ENCODE measurements at regions of chr7 and their contacts with region 1.

Region 1: DNA sequence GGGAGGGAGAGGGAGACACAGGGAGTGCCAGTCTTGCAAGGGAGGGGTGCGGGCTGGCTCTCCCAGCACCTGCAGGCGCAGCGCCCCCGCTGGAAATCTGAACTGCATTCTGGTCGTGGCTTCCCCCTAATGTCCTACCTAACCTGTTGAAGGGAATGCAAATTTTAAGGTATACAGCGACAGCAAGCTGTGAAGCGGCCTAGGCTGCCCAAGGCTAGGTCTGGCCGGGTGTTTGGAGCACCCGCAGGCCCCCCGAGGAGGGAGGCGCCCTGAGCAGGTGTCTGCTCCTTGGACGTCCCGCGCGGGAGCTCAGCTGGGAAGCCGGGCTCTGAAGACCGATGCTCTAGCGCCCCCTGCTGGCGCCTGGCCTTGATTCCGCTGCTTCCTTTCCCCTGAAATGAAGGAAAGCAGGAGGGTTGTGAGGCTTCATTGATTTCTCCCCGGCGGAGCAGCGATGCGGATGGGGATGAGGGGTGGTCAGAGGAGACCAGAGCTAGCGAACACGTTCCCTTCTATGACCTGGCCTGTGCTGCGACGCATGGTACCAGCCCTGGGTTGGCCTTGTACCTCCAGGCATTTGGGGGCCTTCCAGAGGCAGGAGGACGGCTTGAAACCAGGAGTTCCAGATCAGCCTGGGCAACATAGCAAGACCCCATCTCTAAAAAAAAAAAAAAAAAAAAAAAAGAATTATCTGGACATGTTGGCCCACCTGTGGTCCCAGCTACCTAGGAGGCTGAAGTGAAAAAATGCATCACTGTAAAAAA is 601.3 kb downstream of the GALNT17 start:
- DNase-seq: peak; percentile 34 to 50
- ATAC-seq: peak; percentile 55 to 60
- H3K4me3 ChIP-seq: no peak overlapping the region
- H3K27ac ChIP-seq: no peak overlapping the region
- H3K4me1 ChIP-seq: peaks cover 0 to 3% of the 10 kb centered on the region in 2 donors
- H3K27me3 ChIP-seq: no peaks in the 10 kb centered on the region
- CTCF ChIP-seq: peak; percentile 58 to 89 (median 87)
- POLR2A ChIP-seq: no peak

Region 2: GRCh38 chr7:70829221-70830059 is 903.8 kb before region 1 on chr7:
- in situ Hi-C with region 1: no loop called
- intact Hi-C with region 1: loop called (anchors 1 kb)
- DNase-seq: peak; percentile 28 to 38
- ATAC-seq: peak; percentile 62 to 76
- H3K4me3 ChIP-seq: no peak overlapping the region
- H3K27ac ChIP-seq: no peak overlapping the region
- H3K4me1 ChIP-seq: no peaks in the 10 kb centered on the region
- H3K27me3 ChIP-seq: peaks cover 0 to 3% (median 0%) of the 10 kb centered on the region in 3 donors
- CTCF ChIP-seq: peak; percentile 53 to 89 (median 71)
- POLR2A ChIP-seq: no peak

Region 3: GRCh38 chr7:70856866-70857630 is 876.2 kb before region 1 on chr7:
- in situ Hi-C with region 1: loop called (anchors 5 kb)
- intact Hi-C with region 1: loop called (anchors 1 kb)
- DNase-seq: peak; percentile 3 to 24
- ATAC-seq: no peak
- H3K4me3 ChIP-seq: no peak overlapping the region
- H3K27ac ChIP-seq: no peak overlapping the region
- H3K4me1 ChIP-seq: no peaks in the 10 kb centered on the region
- H3K27me3 ChIP-seq: no peaks in the 10 kb centered on the region
- CTCF ChIP-seq: peak; percentile 64 to 91 (median 80)
- POLR2A ChIP-seq: no peak

Region 4: DNA sequence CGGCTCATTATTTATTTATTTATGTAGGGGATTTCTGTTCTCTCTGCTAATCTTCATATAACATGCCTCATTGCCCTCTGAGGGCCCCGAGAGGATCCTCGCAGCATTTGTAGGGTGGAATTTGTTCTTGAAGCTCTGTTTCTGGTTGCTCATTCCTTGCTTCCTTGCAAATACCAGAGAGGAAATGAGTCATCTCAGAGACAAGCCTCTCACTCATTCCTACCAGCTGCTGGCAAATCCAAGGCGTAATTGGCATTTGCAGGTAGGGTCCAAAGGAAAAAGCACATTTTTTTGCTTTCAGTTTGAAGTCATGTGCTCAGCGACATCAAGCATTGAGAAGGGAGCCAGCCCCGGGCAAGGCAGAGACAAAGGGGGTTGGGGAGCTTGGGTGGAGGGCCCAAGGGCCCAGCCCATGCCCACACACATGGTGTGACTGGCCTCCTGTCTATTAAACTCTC is 99.7 kb before region 1 on chr7:
- in situ Hi-C with region 1: no loop called
- intact Hi-C with region 1: no loop called
- DNase-seq: no peak
- ATAC-seq: no peak
- H3K4me3 ChIP-seq: no peak overlapping the region
- H3K27ac ChIP-seq: peak overlapping the region in 1 of 4 donors; percentile 29
- H3K4me1 ChIP-seq: peaks cover 7 to 9% of the 10 kb centered on the region in 2 donors
- H3K27me3 ChIP-seq: no peaks in the 10 kb centered on the region
- CTCF ChIP-seq: no peak
- POLR2A ChIP-seq: no peak

Region 5: GRCh38 chr7:71860572-71860971 is 127.3 kb after region 1 on chr7:
- in situ Hi-C with region 1: no loop called
- intact Hi-C with region 1: no loop called
- DNase-seq: no peak
- ATAC-seq: no peak
- H3K4me3 ChIP-seq: no peak overlapping the region
- H3K27ac ChIP-seq: no peak overlapping the region
- H3K4me1 ChIP-seq: no peaks in the 10 kb centered on the region
- H3K27me3 ChIP-seq: no peaks in the 10 kb centered on the region
- CTCF ChIP-seq: no peak
- POLR2A ChIP-seq: no peak

Region 6: GRCh38 chr7:72462311-72462710 is 729.0 kb after region 1 on chr7:
- in situ Hi-C with region 1: no loop called
- intact Hi-C with region 1: no loop called
- DNase-seq: no peak
- ATAC-seq: no peak
- H3K4me3 ChIP-seq: no peak overlapping the region
- H3K27ac ChIP-seq: no peak overlapping the region
- H3K4me1 ChIP-seq: no peaks in the 10 kb centered on the region
- H3K27me3 ChIP-seq: no peaks in the 10 kb centered on the region
- CTCF ChIP-seq: no peak
- POLR2A ChIP-seq: no peak

Measured in gastrocnemius medialis (tissue), 4 donors.